Common myeloid progenitor, CD34-positive (primary cell): ENCODE measurements at regions of chr17 and their contacts with region 1.

Region 1: DNA sequence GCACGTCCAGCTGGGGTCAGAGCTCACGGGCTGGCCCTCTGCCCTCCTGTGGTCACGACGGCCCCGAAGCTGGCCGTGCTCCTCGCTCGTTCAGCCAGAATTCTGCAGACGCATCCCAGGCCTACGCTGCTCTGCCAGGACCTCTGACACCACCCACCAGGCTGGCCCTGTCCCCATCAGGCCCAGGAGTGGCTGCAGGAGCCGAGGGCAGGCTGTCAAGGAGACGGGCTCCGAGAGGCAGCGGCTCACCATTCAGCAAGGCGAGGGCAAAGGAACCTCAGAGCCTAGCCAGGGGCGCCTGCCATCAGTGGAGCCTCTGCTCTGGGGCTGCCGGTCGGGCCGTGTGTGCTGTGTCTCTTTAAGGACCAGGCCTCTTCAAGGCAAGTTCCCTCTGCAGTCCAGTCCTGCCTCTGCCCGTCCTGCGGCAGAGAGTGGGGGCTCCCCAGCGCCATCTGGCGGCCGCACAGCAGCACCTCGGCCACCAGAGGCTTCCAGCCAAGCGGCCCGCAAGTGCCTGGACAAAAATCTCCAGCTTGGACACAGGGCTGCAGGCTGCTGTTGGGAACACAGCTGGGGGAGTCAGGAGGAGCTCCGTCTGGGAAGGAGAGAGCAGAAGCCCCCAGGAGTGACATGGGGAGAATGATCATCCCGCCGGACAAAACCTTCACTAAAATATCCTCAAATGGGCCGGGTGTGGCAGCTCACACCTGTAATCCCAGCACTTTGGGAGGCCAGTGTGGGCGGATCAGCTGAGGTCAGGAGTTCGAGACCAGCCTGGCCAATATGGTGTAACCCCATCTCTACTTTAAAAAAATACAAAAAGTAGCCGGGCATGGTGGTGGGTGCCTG is 7.4 kb upstream of the ABR start:
- DNase-seq: peak; percentile 79 to 88 (median 87)
- H3K4me3 ChIP-seq: no peak overlapping the region
- H3K27ac ChIP-seq: no peak overlapping the region
- H3K4me1 ChIP-seq: peaks cover 0 to 68% (median 23%) of the 10 kb centered on the region in 4 experiments
- H3K27me3 ChIP-seq: no peaks in the 10 kb centered on the region

Region 2: DNA sequence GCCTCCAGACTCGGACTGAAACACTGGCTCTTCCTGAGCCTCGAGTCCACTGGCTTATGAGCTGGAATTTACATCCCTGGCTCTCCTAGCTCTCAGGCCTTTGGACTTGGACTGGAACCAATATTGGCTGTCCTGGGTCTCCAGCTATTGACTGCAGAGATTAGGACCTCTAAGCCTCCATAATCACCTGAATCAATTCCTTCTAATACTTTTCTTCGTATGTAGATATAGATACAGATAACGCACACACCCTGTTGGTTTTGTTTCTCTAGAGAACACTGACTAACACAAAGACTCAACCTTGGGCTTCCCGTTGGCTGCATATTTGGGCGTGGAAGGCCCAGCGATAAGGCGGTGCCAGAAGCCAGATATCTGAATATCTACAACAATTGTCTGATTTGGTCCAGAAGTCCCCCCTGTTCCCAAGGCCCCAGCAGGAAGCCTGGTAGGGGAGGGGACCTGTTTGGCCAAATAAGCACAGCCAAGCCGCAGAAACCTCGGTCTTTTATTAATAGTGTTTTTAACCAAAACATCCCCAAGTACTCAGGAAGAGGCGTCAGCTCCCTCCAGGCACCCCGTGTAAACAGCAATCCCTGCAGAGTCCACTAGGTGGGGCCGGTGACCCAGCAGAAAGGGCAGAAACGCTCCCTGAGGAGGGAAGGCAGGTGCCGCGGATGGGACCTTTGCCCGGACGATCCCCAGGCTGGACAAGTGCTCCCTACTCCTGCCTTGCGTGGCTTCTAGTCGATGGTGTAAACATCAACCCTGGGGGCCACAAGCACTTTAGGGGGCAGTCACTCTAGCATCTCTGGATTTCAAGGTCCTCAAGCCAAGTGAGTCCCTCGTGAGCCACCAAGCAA is 64.4 kb before region 1 on chr17:
- CTCF ChIA-PET with region 1: interaction called, 65 read pairs
- POLR2A ChIA-PET with region 1: no interaction called
- DNase-seq: peak; percentile 60 to 73 (median 67)
- H3K4me3 ChIP-seq: peak overlapping the region in 1 of 7 experiments; percentile 34
- H3K27ac ChIP-seq: no peak overlapping the region
- H3K4me1 ChIP-seq: peaks cover 0 to 13% (median 9%) of the 10 kb centered on the region in 4 experiments
- H3K27me3 ChIP-seq: no peaks in the 10 kb centered on the region

Region 3: GRCh38 chr17:1164935-1165556 is 22.1 kb before region 1 on chr17:
- CTCF ChIA-PET with region 1: interaction called, 11 read pairs
- POLR2A ChIA-PET with region 1: no interaction called
- DNase-seq: peak in 1 of 3 donors; percentile 23
- H3K4me3 ChIP-seq: peak overlapping the region in 2 of 7 experiments; percentile 11 to 19
- H3K27ac ChIP-seq: no peak overlapping the region
- H3K4me1 ChIP-seq: peaks cover 0 to 22% (median 8%) of the 10 kb centered on the region in 4 experiments
- H3K27me3 ChIP-seq: no peaks in the 10 kb centered on the region

Region 4: DNA sequence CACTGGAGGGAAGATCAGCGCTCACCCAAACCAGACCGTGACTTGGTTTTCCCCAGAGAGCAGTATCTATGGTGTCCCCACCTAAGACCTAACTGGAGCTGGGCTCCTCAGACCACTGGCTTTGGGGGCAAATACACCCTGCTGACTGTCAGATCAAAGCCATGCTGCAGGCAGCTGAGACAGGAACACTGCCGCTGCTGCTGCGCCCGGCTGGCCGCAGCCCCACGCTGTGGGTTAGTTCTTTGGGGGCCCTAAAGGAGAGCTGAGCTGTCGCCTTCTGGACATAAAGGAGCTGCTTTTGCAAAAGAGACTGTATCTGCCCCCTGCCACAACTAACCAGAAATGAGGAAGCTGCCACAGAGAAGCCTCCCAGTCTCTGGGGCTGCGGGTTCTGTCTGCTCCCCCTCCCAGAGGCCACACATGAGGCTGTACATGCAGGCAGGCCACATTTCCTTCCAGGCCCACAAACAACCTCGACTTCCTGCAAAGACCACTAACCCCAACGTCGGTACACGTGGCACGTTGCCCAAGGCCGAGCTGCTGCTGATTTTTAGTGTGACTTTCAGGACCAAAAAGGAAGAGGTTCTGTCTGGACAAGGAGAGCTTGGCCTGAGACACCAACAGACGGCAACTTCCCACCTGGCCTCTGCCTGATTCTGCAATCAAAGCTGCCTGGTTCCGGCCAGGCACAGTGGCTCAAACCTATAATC is 10.8 kb after region 1 on chr17:
- CTCF ChIA-PET with region 1: interaction called, 43 read pairs
- POLR2A ChIA-PET with region 1: interaction called, 3 read pairs
- DNase-seq: peak; percentile 99 to 100 (median 100)
- H3K4me3 ChIP-seq: peak overlapping the region in 6 of 7 experiments; percentile 16 to 61 (median 50)
- H3K27ac ChIP-seq: peak overlapping the region in 1 of 2 experiments; percentile 76
- H3K4me1 ChIP-seq: peaks cover 11 to 88% (median 50%) of the 10 kb centered on the region in 4 experiments
- H3K27me3 ChIP-seq: peaks cover 0 to 2% (median 0%) of the 10 kb centered on the region in 5 experiments

Region 5: DNA sequence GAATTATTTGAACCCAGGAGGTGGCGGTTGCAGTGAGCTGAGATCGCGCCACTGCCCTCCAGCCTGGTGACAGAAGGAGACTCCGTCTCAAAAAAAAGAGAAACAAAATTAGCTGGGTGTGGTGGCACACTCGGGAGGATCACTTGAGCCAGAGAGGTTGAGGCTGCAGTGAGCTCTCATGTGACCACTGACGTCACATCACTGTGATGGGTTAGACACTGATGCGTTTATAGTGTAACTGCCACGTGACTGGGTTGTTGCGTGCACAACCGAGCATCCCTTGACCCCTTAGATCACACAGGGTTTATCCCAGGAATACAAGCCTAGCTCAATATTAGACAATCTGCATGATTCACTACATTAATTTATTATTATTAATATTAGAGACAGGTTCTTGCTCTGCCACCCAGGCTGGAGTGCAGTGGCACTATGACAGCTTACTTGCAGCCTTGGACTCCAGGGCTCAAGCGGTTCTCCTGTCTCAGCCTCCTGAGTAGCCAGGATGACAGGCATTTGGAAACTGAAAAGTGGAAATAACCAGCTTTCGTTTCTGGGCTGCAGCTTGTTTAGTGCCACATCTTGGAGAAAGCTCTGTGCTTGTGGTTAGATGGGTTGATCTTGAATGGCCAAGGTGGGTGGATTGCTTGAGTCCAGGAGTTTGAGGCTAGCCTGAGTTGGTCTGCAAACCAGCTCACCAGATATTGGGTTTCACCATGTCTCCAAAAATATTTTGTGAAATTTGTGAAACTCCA is 19.1 kb after region 1 on chr17:
- CTCF ChIA-PET with region 1: interaction called, 14 read pairs
- POLR2A ChIA-PET with region 1: no interaction called
- DNase-seq: no peak
- H3K4me3 ChIP-seq: no peak overlapping the region
- H3K27ac ChIP-seq: no peak overlapping the region
- H3K4me1 ChIP-seq: peaks cover under 1 to 42% (median 18%) of the 10 kb centered on the region in 4 experiments
- H3K27me3 ChIP-seq: peaks cover 0 to 1% (median 0%) of the 10 kb centered on the region in 5 experiments

Region 6: DNA sequence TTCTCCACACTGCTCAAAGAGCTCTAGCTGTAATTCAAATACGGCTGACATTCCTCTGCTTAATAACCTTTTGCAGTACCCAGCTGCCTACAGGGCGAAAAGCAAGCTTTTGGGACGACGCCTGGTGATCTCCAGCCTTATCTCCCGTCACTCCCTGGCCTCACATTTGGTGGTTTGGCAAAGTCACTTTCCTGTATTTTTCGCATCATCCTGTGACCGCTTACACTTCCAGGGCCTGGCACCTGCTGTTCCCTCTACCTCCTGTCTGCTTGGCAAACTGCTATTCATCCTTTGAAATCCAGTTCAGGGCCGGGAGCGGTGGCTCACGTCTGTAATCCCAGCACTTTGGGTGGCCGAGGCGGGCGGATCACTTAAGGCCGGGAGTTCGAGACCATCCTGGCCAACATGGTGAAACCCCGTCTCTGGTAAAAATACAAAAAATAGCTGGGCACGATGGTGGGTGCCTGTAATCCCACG is 80.4 kb after region 1 on chr17:
- CTCF ChIA-PET with region 1: no interaction called
- POLR2A ChIA-PET with region 1: no interaction called
- DNase-seq: peak; percentile 64 to 80 (median 70)
- H3K4me3 ChIP-seq: peak overlapping the region in 6 of 7 experiments; percentile 41 to 80 (median 72)
- H3K27ac ChIP-seq: no peak overlapping the region
- H3K4me1 ChIP-seq: peaks cover 0 to 19% (median 6%) of the 10 kb centered on the region in 4 experiments
- H3K27me3 ChIP-seq: peaks cover 0 to 46% (median 16%) of the 10 kb centered on the region in 5 experiments